Esophagus muscularis mucosa (tissue), 4 donors: ENCODE measurements at regions of chrX and their contacts with region 1.

Region 1: GRCh38 chrX:119606280-119607015 is at the start of gene NKRF:
- DNase-seq: peak; percentile 94
- H3K4me3 ChIP-seq: peak within 1 kb of the TSS; percentile 66 to 73 (median 70)
- H3K27ac ChIP-seq: peak within 1 kb of the TSS; percentile 87 to 89 (median 88)
- H3K4me1 ChIP-seq: peaks cover 0 to 15% (median 5%) of the 10 kb centered on the region in 4 donors
- H3K27me3 ChIP-seq: no peaks in the 10 kb centered on the region
- CTCF ChIP-seq: no peak
- EP300 ChIP-seq: no peak
- POLR2A ChIP-seq: peak; percentile 68
- total RNA-seq, gene NKRF: 3.3 to 6.7 (median 5.3) TPM

Region 2: GRCh38 chrX:119516157-119516702 is 90.2 kb before region 1 on chrX:
- intact Hi-C with region 1: loop called (anchors 10 kb)
- DNase-seq: no peak
- H3K4me3 ChIP-seq: no peak overlapping the region
- H3K27ac ChIP-seq: no peak overlapping the region
- H3K4me1 ChIP-seq: peaks cover 0 to 7% (median 3%) of the 10 kb centered on the region in 4 donors
- H3K27me3 ChIP-seq: no peaks in the 10 kb centered on the region
- CTCF ChIP-seq: peak; percentile 67 to 78 (median 69)
- EP300 ChIP-seq: no peak
- POLR2A ChIP-seq: no peak